ENCODE measurements at regions of chr11 and their contacts with region 1.

Region 1: GRCh38 chr11:88543902-88544655 is 206.5 kb upstream of the CTSC start:
- H3K4me3 Mint-ChIP-seq: peak overlapping the region; percentile 66
- H3K27ac Mint-ChIP-seq: peak overlapping the region; percentile 82
- H3K4me1 Mint-ChIP-seq: peaks cover 25% of the 10 kb centered on the region
- H3K27me3 Mint-ChIP-seq: peaks cover 2% of the 10 kb centered on the region

Region 2: GRCh38 chr11:88016392-88017170 is 527.5 kb before region 1 on chr11:
- intact Hi-C with region 1: loop called (anchors 1 kb)
- H3K4me3 Mint-ChIP-seq: no peak overlapping the region
- H3K27ac Mint-ChIP-seq: no peak overlapping the region
- H3K4me1 Mint-ChIP-seq: no peaks in the 10 kb centered on the region
- H3K27me3 Mint-ChIP-seq: no peaks in the 10 kb centered on the region

Region 3: GRCh38 chr11:88103337-88104206 is 440.5 kb before region 1 on chr11:
- intact Hi-C with region 1: loop called (anchors 1 kb)
- H3K4me3 Mint-ChIP-seq: no peak overlapping the region
- H3K27ac Mint-ChIP-seq: no peak overlapping the region
- H3K4me1 Mint-ChIP-seq: peaks cover 10% of the 10 kb centered on the region
- H3K27me3 Mint-ChIP-seq: no peaks in the 10 kb centered on the region

Region 4: DNA sequence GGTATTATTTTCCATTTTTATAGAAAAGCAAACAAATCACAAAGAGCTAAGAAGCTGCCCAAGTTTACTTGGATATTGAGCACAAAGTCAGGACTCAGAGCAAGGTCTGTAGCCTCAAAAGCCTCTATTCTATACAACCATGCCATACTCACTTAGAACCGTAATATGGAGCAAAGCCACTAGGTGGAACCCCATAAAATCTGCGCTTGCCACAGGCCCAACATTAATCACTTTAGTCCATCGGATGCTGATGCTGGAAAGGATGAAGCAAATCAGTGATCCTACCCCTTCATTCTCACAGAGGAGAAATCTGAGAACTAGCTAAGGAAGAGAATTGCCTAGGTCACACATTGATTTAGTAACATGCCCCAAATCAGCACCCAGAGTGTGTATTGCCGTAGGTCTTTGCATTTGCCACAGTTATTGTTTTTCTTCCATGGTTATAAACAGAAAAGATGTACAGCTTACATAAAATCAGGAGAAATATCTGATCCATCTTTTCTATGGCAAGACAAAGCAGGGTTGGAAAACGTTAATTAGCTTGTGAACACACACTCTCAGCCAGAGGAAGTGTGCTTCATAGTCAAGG is 312.1 kb before region 1 on chr11:
- intact Hi-C with region 1: loop called (anchors 5 kb)
- H3K4me3 Mint-ChIP-seq: no peak overlapping the region
- H3K27ac Mint-ChIP-seq: no peak overlapping the region
- H3K4me1 Mint-ChIP-seq: peaks cover 5% of the 10 kb centered on the region
- H3K27me3 Mint-ChIP-seq: no peaks in the 10 kb centered on the region

Region 5: GRCh38 chr11:88327061-88327460 is 217.0 kb before region 1 on chr11:
- intact Hi-C with region 1: loop called (anchors 5 kb)
- H3K4me3 Mint-ChIP-seq: peak overlapping the region; percentile 72
- H3K27ac Mint-ChIP-seq: peak overlapping the region; percentile 90
- H3K4me1 Mint-ChIP-seq: peaks cover 62% of the 10 kb centered on the region
- H3K27me3 Mint-ChIP-seq: no peaks in the 10 kb centered on the region

Region 6: DNA sequence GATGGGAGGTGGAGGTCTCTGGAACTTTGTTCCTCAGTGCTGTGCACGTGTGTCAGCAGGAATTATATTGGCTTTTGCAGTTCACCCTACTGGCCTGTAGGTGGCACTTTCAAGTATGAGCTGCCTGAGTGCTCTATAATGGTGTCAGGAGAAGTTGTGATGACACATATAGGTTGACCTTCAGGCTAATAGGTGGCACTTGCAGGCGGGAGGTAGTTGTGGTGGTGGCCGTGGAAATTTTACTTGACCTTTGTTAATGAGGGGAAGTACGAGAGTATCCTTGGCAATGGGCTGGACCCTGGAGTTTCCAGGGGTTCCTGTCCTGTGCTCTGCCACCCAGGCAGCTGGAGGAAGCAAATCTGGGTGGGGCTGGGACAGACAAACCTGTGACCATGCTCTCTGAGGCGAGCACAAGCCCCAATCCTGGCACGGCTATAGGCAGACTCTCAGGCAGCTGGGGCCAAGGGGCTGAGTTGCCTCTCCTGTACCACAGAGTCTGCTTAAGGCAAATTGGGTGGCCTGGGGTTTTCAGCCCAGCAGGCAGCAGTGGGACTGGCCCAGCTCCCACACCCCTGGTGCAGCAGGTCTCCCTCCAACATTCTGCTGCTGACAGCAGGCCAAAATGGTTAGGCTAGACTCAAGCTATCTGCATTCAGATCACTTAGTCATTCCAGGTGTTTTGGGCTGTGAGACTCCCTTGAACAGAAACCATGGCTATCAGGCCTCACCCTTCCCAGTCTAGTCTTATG is 59.0 kb before region 1 on chr11:
- intact Hi-C with region 1: loop called (anchors 10 kb)
- H3K4me3 Mint-ChIP-seq: no peak overlapping the region
- H3K27ac Mint-ChIP-seq: peak overlapping the region; percentile 42
- H3K4me1 Mint-ChIP-seq: peaks cover 25% of the 10 kb centered on the region
- H3K27me3 Mint-ChIP-seq: peaks cover 4% of the 10 kb centered on the region

Region 7: GRCh38 chr11:88603091-88603867 is 59.2 kb after region 1 on chr11:
- intact Hi-C with region 1: no loop called
- H3K4me3 Mint-ChIP-seq: no peak overlapping the region
- H3K27ac Mint-ChIP-seq: no peak overlapping the region
- H3K4me1 Mint-ChIP-seq: no peaks in the 10 kb centered on the region
- H3K27me3 Mint-ChIP-seq: no peaks in the 10 kb centered on the region

Region 8: DNA sequence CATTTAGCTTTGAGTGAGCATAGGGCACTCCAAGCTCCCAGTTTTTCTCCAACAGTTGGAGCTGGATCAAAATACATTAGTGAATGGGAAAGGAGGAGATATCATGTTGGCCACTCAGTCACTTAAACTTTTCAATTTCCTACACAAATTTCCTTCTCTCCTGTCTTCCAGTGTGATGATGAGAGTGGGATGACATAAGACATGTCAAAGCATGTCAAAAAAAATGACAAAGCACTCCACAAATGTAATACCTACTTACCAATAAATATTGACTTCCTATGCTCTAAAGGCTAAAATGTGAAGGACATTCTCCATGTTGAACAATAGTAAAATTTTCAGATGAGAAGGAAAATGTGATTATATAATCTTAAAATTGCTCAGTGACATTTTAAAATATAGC is 523.2 kb after region 1 on chr11:
- intact Hi-C with region 1: no loop called
- H3K4me3 Mint-ChIP-seq: no peak overlapping the region
- H3K27ac Mint-ChIP-seq: no peak overlapping the region
- H3K4me1 Mint-ChIP-seq: no peaks in the 10 kb centered on the region
- H3K27me3 Mint-ChIP-seq: peaks cover 35% of the 10 kb centered on the region

Measured in dendritic cell treated with granulocyte-macrophage colony-stimulating factor and Interleukin-4, amounts not matched to agents 40 ng/mL and 50 ng/mL, for 4 days (primary cell).